HAP-1 (cell line): ENCODE measurements at regions of chr22 and their contacts with region 1.

Region 1: DNA sequence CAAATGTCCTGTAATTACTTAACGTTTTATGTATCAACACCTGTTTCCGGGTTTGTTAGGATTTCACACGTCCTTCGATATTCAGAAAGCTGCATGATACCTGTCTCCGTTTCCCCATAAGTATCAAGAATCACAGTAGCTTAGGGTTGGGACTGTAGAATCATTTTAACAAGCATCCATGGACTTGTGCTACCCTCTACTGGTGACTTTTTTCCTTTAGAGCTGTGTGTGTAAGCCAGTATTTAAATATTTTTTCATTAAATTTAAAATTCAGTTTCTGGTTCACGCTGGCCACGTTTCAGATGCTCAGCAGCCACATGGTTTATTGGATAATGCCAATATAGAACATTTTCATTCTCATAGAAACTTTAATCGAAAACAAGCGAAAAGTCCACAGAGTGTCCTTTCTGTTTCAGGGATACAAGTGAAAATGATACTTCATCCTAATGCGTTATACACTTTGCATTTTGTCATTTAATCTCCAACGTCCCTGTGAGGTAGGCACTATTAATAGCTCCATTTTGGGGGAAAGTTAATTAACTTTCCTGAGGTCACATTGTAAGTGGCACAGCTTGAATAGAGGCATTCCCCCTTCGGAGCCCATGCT is 61.5 kb upstream of the SLC25A18 start:
- DNase-seq: peak; percentile 48 to 74
- H3K4me3 ChIP-seq: no peak overlapping the region
- H3K4me1 ChIP-seq: no peaks in the 10 kb centered on the region
- H3K27me3 ChIP-seq: no peaks in the 10 kb centered on the region

Region 2: DNA sequence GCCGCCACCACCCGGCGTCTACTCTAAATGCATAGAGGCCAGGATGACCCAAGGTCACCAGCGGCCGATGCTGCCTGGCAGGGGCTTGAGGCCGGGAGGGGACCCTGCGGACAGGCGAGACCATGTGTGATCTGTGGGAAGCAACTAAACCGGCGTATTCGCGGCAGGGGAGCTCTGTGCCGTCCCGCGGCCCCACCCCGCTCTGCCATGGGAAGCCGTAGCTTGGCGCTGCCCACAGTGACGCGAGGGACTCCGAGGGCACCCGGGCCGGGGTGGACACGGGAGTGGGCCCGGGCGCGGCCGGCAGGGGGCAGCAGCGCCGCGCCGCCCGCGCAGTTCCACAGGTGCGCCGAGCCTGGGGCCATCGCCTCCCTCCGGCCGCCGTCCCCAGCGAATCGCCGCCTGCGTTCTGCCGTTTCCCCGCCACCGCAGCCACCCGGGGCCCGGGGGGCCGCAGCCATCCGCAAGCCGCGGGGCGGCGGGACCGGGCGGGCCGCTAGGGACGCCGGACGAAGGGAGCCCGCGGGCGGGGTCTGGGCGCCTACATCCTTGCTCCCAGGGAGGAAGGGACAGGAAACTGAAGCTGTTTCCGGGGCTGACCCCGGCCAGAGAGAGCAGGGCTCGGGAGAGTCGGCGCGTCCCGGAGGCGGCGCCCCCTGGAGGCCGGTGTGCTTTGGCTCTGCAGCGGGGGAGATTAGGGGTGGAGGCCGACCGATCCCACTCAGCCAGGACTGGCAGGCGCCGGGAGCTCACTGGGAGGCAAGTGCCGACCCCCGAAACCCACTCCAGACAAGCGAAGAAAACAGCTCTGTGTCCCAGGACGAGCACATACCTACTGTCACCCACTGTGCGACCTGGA is 330.2 kb before region 1 on chr22:
- in situ Hi-C with region 1: loop called (anchors 5 kb)
- DNase-seq: peak; percentile 81 to 95
- H3K4me3 ChIP-seq: peak overlapping the region; percentile 48
- H3K4me1 ChIP-seq: peaks cover 4% of the 10 kb centered on the region
- H3K27me3 ChIP-seq: no peaks in the 10 kb centered on the region

Region 3: DNA sequence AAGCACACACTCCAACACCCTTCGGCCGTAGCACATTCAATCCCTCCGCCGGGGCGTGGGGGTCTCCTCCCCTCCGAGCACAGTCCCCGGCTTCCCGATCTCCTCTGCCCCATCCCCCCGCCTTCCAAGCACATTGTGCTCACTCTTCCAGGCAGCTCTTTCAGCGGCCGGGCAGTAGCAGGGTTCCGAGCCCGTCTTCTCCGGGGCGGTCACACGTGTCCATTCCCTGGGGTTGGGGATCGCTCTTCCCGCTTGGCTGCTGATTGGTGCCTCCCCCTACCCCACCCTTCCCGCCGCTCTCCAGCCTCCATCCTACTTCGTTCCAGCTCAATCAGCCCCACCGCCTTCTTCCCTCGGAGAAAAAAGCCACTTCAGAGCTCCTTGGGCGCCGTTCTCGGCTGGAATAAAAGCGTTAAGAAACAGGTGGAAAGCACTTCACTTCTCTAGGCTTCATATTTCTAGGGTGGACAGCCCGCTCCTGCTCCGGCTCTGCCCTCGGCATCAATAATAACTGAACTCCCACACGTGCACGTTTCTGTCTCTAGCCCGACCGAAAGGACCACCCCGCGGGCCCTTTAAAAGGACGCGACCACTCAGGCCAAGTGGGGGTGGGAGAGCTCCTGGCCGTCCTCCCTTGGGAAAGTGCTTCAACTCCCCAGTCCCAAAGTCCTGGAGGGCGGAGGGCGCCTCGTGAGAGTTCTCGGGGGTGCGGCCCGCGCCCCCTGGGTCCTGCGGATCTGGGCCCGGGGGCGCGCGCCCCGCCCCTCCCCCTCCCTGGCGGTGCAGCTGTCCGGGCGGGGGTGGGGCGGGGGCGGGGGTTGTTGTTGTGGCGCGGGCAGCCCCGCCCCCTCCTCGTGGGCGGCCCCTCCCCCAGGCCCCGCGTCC is 133.0 kb before region 1 on chr22:
- in situ Hi-C with region 1: loop called (anchors 10 kb)
- DNase-seq: peak; percentile 78 to 89
- H3K4me3 ChIP-seq: peak overlapping the region; percentile 47
- H3K4me1 ChIP-seq: peaks cover 24% of the 10 kb centered on the region
- H3K27me3 ChIP-seq: no peaks in the 10 kb centered on the region